ENCODE measurements at regions of chr1 and their contacts with region 1.

Region 1: DNA sequence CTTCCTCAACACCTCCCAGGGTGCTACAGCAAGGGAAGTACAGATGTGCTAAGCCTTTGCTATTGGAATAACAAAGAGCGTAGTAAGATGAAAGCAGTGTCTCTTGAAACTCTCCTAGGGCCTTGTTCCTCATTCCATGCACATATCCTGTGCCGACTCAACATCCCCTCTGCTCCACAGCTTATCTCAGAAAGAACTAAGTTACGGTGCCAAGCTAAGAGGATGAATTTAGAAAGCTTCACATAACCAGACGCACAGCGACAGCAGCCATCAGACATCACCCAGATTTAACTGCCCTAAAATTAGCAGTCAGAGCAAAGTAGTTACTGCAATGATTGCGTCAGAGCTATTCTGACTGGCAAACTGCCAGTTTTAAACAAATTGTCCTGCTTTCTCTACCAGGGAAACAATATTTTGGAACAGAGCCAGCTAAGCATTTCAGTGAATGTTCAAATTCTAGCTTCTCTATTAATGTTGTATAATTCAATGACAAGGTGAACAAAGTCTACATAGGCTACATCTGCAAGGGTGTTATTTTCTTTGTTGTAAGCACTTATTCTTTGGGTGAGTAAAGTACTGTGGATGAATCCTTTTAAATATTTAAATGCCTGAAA is 9.5 kb downstream of the SIPA1L2 start:
- ATAC-seq: peak; percentile 65 to 85 (median 80)
- H3K4me3 ChIP-seq: peak overlapping the region in 1 of 5 donors; percentile 5
- H3K27ac ChIP-seq: peak overlapping the region; percentile 28 to 44
- H3K4me1 ChIP-seq: peaks cover 51 to 52% of the 10 kb centered on the region in 2 donors

Region 2: DNA sequence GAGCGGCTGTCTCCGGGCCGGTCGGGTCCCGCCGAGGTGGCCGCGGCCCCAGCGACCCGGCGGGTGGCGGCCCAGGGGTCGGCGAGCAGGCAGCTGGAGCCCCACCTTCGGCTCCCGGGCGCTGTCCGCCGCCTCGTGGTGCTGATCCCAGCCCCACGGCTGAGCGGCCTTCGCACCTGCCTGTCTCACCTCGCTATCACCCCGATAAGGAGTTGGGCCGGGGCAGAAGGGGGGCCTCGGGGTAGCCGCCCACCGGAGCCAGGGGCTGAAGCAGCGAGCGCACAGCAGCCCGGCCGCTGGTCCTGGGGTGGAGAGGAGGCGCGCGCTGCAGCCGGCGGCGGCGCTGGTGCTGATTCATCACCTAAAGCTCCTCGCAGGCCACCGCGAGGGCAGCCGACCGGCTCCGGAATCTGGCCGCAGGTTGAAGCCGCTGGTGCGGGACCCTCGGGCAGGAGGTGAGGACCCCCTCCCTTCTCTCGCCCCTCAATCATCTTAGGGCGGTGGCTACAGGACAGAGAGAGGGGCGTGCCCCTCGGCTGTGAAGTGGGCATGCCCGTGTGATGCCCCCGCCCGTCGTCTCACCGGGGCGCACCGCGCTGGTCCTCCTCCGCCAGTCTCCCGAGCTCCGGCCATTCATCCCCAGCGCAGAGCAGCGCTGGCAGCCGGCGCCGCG is 1458.0 kb before region 1 on chr1:
- in situ Hi-C with region 1: no loop called
- ATAC-seq: peak; percentile 58 to 81 (median 66)
- H3K4me3 ChIP-seq: peak overlapping the region; percentile 40 to 68 (median 54)
- H3K27ac ChIP-seq: peak overlapping the region; percentile 55 to 85
- H3K4me1 ChIP-seq: peaks cover 19 to 38% of the 10 kb centered on the region in 2 donors

Region 3: DNA sequence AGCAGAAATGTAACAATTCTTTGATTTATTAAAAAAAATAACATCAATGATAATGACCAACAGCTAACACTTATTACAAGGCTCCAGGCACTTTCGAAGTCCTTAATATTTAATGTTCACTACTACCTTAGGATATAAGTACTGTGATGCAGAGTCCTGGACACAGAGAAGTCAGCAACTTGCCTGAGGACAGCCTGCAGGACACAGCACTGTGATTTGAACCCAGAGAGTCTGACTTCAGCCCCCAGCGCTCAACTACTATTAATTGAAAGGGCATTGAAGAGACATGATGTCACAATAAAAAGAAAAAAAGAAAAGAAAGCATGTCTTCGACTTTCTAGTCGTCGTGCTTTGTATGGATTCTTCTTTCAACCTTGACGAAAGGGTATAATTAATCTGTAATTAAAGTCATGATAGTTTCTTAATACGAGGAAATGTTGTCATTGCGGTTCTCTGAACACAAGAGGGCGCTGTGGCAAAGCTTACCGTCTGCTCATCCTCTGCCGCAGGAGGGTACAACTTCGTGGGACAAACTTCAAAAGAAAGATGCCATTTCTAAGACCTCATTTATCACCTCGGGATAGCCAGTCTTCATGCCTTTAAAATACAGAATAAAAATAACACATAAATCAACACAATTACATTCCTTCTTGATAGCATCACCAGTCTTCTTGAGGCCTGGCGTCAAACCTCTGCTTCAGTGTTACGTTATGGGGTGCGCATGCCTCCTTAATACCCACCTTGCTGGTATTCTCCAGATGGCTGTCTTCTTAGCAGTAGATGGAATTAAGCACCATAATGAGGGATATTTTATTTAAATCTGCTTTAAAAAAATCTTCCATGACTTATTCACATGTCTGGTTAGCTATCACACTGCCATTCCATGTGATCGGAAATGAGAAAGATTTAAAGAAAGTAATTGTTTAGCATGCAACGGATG is 753.8 kb before region 1 on chr1:
- in situ Hi-C with region 1: loop called in 5 of 9 experiments (anchors 25 kb)
- ATAC-seq: peak in 7 of 8 experiments; percentile 36 to 72 (median 50)
- H3K4me3 ChIP-seq: no peak overlapping the region
- H3K27ac ChIP-seq: no peak overlapping the region
- H3K4me1 ChIP-seq: peaks cover 2 to 18% of the 10 kb centered on the region in 2 donors

Region 4: GRCh38 chr1:231885209-231885854 is 735.1 kb before region 1 on chr1:
- in situ Hi-C with region 1: loop called in 1 of 9 experiments (anchors 25 kb)
- ATAC-seq: no peak
- H3K4me3 ChIP-seq: no peak overlapping the region
- H3K27ac ChIP-seq: no peak overlapping the region
- H3K4me1 ChIP-seq: peaks cover 0 to 4% of the 10 kb centered on the region in 2 donors

Region 5: DNA sequence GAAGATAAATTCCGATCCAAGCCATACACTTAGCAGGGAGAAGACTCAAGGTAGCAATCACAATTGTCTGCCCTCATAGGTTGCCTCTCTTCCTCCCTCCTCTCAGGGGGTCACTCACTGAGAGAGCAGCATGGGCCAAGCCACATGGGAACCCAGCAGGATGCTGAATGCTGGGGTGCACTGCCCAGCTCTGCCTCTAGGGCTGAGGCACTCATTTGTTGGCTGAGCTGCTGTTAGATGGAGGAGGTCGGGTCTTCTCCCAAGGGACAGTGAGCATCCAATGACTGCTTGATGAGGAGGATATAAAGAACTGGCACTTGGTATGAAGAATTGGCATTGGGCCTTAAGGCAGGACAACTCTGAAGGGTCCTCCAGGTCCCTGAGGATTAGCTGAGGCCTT is 409.3 kb before region 1 on chr1:
- in situ Hi-C with region 1: loop called in 1 of 9 experiments (anchors 25 kb)
- ATAC-seq: no peak
- H3K4me3 ChIP-seq: no peak overlapping the region
- H3K27ac ChIP-seq: no peak overlapping the region
- H3K4me1 ChIP-seq: peaks cover 0 to 8% of the 10 kb centered on the region in 2 donors

Region 6: DNA sequence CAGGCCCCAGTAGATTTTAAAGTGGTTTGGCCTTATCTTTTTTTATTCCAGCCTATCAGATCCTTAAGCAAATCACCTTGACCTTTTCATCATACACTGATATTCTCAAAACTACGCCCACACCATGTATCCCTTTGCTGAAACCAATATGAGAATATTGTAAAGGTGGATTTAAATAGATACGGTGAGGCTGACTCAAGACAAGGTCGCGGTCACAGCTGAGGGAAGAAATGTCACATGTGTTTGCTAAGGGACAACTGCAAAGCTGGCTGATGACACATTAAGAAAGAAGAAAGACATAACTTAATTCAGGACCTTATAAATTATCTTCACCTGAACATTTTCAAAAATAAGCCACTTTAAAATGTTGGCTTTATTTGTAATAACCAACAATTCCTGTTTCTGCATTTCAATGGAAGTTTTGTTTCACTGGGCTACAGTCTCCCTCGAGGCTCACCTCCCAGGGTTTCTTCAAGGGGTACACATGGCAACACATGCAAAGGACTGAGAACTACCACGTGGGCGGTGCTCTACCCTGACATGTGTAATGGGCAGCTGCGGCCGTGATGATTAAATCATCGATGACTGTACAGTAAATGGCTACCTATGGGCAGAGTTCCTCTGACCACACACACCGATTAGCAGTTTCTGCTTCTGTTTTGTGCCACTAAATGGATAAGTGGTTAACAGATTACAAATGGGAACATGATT is 180.0 kb before region 1 on chr1:
- in situ Hi-C with region 1: no loop called
- ATAC-seq: peak in 5 of 8 experiments; percentile 67 to 89 (median 74)
- H3K4me3 ChIP-seq: no peak overlapping the region
- H3K27ac ChIP-seq: no peak overlapping the region
- H3K4me1 ChIP-seq: peaks cover 37 to 38% of the 10 kb centered on the region in 2 donors

Region 7: GRCh38 chr1:232767305-232768074 is 147.0 kb after region 1 on chr1:
- in situ Hi-C with region 1: no loop called
- ATAC-seq: peak in 4 of 8 experiments; percentile 23 to 95 (median 86)
- H3K4me3 ChIP-seq: no peak overlapping the region
- H3K27ac ChIP-seq: no peak overlapping the region
- H3K4me1 ChIP-seq: no peaks in the 10 kb centered on the region